ENCODE measurements at regions of chr19 and their contacts with region 1.

Region 1: DNA sequence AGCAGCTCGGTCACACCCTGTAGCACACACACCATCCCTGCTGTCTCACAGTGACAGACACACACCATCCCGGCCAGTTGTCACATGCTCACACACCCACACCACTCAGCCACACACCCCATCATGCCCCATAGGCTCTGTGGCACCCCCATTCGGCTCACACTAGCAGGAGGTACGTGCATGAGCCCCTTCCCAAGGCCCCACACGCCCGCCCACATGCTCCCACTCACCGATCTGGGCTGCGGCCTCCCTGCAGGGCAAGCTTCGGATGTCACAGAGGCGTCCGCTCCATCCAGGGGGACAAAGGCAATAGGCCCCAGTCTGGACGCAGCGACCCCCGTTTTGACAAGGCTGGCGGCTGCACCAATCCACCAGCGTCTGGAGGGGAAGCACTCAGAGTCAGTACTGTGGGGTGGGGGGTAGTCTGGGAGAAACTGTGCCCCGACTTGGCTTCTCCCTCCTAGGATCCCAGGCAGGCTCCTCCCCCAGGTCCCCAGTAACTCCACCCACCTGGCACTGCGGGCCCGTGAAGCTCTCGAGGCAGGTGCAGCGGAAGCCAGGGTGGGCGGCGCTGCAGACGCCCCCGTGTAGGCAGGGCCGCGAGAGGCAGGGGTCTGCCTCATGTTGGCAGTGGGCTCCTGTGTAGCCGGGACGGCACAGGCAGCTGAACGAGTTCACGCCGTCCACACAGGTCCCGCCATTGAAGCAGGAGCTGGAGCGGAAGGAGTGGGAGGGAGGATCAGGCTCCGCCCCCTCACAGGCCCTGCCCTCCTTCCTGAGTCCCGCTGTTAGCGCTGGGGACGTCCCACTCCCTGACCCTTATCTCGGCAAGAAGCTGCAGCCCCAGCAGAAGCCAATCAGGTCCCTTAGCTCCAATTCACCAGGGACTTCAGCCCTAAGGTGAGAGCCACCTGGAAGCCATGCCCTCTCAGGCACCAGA is 20.1 kb downstream of the NOTCH3 start:
- DNase-seq: peak; percentile 4
- H3K4me3 ChIP-seq: no peak overlapping the region
- H3K27ac ChIP-seq: no peak overlapping the region
- H3K4me1 ChIP-seq: no peaks in the 10 kb centered on the region
- H3K27me3 ChIP-seq: no peaks in the 10 kb centered on the region

Region 2: GRCh38 chr19:15129856-15130597 is 50.7 kb before region 1 on chr19:
- in situ Hi-C with region 1: no loop called
- DNase-seq: no peak
- H3K4me3 ChIP-seq: no peak overlapping the region
- H3K27ac ChIP-seq: no peak overlapping the region
- H3K4me1 ChIP-seq: 0 out of 2 replicates have a peak, but pooled peaks cover 5% of the 10 kb centered on the region
- H3K27me3 ChIP-seq: no peaks in the 10 kb centered on the region

Region 3: DNA sequence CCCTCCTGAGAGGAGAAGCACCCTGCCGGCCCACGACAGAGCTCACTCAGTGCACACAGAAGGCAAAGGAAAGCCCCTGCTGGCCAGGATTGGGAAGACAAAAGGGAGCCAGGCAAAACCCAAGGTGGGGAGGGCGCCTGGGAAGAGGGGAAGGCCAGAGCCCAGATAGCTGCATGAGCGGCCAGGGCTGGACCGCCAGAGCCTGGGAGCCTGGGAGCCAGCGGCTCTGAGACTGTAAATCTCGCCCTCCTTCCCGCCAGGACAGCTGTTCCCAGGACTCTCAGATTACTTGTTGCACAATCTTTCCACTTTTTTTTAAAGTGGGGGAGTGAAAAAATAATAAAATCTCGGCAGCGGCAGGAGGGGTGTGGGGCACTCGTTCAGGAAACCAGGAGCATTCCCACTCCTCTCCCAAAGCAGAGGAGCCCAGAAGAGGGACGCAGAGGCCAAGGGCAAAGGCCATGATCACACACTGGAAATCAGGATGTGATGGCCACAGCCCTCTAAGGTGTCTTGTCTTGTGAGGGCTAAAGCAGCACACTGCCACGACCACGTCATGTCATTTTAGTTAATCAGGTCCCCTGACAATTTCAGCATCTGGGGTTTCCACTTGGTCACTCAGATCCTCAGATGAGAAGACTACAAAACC is 71.2 kb after region 1 on chr19:
- in situ Hi-C with region 1: loop called (anchors 10 kb)
- DNase-seq: peak; percentile 97
- H3K4me3 ChIP-seq: peak overlapping the region; percentile 32
- H3K27ac ChIP-seq: peak overlapping the region; percentile 100
- H3K4me1 ChIP-seq: peaks cover 41% of the 10 kb centered on the region
- H3K27me3 ChIP-seq: no peaks in the 10 kb centered on the region